OCI-LY7 (cell line): ENCODE measurements at regions of chr13 and their contacts with region 1.

Region 1: DNA sequence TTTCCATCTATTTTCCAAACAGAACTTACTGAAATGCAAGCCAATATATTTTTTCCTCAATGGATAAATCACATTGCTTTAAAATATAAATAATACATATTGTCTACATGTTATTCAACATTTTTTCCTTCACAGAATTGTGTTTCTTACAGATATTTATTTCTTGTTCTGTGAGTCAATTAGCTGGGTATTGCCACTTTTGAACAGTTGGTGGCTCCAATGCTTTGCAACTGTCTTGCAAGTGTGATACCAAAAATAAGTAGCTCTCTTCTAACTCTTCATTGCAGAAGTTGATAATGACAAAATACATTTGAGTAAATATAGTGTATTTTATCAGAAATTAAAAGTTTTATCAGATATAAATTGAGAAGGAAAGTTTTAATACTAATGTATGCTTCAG is 17.1 kb upstream of the GPC5 start:
- DNase-seq: peak; percentile 65
- H3K4me3 ChIP-seq: no peak overlapping the region
- H3K27ac ChIP-seq: no peak overlapping the region
- H3K4me1 ChIP-seq: no peaks in the 10 kb centered on the region
- CTCF ChIP-seq: no peak

Region 2: GRCh38 chr13:91165758-91166157 is 215.6 kb before region 1 on chr13:
- CTCF ChIA-PET with region 1: no interaction called
- POLR2A ChIA-PET with region 1: no interaction called
- intact Hi-C with region 1: no loop called
- DNase-seq: no peak
- H3K4me3 ChIP-seq: no peak overlapping the region
- H3K27ac ChIP-seq: no peak overlapping the region
- H3K4me1 ChIP-seq: no peaks in the 10 kb centered on the region
- CTCF ChIP-seq: no peak

Region 3: GRCh38 chr13:91369441-91369831 is 11.9 kb before region 1 on chr13:
- CTCF ChIA-PET with region 1: no interaction called
- POLR2A ChIA-PET with region 1: interaction called, 14 read pairs
- intact Hi-C with region 1: no loop called
- DNase-seq: no peak
- H3K4me3 ChIP-seq: no peak overlapping the region
- H3K27ac ChIP-seq: no peak overlapping the region
- H3K4me1 ChIP-seq: no peaks in the 10 kb centered on the region
- CTCF ChIP-seq: no peak

Region 4: DNA sequence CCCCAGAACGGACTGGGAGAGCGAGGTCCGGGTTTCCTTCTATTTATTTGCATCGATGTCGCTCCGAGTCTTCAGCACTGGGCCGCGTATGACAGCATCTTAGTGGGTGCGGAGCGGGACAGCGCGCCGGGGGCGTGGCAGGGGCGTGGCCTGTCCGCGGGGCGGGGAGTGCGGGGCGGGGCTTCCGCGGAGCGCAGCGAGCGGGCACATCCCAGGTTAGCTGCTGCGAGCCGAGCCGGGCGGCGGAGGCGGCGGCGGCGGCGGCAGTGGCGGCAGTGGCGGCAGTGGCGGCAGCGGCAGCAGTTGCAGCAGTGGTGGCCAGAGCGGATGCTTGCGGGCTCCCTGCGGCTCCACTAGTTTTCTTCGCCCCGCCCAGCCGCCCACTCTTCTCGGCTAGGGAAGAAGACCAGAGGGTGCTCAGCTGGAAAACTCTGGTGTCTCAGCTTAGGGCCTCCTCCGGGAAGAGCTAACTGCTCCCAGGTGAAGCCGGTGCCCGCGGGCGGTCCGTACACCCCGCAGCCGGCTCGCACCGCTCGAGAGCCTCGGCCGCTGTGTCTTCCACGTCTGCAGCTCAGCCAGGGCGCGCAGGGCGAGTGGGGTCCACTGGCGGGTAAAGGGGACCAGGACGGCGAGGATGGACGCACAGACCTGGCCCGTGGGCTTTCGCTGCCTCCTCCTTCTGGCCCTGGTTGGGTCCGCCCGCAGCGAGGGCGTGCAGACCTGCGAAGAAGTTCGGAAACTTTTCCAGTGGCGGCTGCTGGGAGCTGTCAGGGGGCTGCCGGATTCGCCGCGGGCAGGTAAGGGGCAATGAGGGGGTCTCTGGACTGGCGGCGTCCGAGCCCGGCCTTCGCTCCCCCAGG is 17.3 kb after region 1 on chr13 and contains the start of gene GPC5:
- CTCF ChIA-PET with region 1: no interaction called
- POLR2A ChIA-PET with region 1: interaction called, 17 read pairs
- intact Hi-C with region 1: no loop called
- DNase-seq: peak; percentile 86
- H3K4me3 ChIP-seq: peak within 1 kb of the TSS; percentile 41
- H3K27ac ChIP-seq: no peak within 1 kb of the TSS
- H3K4me1 ChIP-seq: peaks cover 10% of the 10 kb centered on the region
- CTCF ChIP-seq: no peak
- total RNA-seq, gene GPC5: 1.7 and 2.4 TPM in 2 replicates